IMR-90 (cell line): ENCODE measurements at regions of chr9 and their contacts with region 1.

Region 1: GRCh38 chr9:2602704-2603116 is 18.9 kb upstream of the VLDLR start:
- DNase-seq: peak; percentile 23
- ATAC-seq: peak; percentile 42
- H3K4me3 ChIP-seq: no peak overlapping the region
- H3K27ac ChIP-seq: no peak overlapping the region
- H3K4me1 ChIP-seq: no peaks in the 10 kb centered on the region
- H3K27me3 ChIP-seq: no peaks in the 10 kb centered on the region; the same call in 1 of the 2 replicates
- CTCF ChIP-seq: no peak
- POLR2A ChIP-seq: no peak
- RAD21 ChIP-seq: no peak

Region 2: DNA sequence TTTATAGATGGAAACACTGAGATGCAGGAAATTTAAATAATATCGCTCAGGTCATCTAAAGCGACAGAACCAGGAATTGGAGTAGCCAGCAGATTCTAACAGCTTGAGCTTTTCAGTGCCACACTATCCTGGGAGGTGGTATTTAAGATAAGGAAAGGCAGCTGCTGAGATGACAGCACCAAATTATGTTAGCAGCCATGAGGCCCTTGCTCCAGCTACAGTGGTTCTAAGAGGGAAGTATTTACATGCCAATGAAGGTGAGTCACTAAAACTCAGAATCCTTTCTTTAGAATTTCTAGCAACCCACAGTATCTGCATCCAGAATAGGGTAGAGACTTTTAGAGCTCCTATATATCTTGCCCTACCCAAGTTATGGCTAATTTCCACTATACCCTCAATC is 108.1 kb before region 1 on chr9:
- CTCF ChIA-PET with region 1: no interaction called
- POLR2A ChIA-PET with region 1: no interaction called
- dilution Hi-C with region 1: no loop called
- in situ Hi-C with region 1: no loop called
- intact Hi-C with region 1: loop called (anchors 5 kb)
- DNase-seq: peak; percentile 88
- ATAC-seq: peak; percentile 94
- H3K4me3 ChIP-seq: no peak overlapping the region
- H3K27ac ChIP-seq: peak overlapping the region; percentile 76; the same call in 1 of the 2 replicates
- H3K4me1 ChIP-seq: peaks cover 12% of the 10 kb centered on the region
- H3K27me3 ChIP-seq: no peaks in the 10 kb centered on the region
- CTCF ChIP-seq: no peak
- POLR2A ChIP-seq: no peak
- RAD21 ChIP-seq: 0 out of 2 replicates have a peak, but pooled peaks have one; percentile 11

Region 3: GRCh38 chr9:2506321-2506720 is 96.4 kb before region 1 on chr9:
- CTCF ChIA-PET with region 1: no interaction called
- POLR2A ChIA-PET with region 1: no interaction called
- dilution Hi-C with region 1: no loop called
- in situ Hi-C with region 1: no loop called
- intact Hi-C with region 1: no loop called
- DNase-seq: no peak
- ATAC-seq: no peak
- H3K4me3 ChIP-seq: no peak overlapping the region
- H3K27ac ChIP-seq: no peak overlapping the region
- H3K4me1 ChIP-seq: peaks cover 2% of the 10 kb centered on the region; the same call in 1 of the 2 replicates
- H3K27me3 ChIP-seq: no peaks in the 10 kb centered on the region
- CTCF ChIP-seq: no peak
- POLR2A ChIP-seq: no peak
- RAD21 ChIP-seq: no peak

Region 4: GRCh38 chr9:2559212-2560152 is 43.2 kb before region 1 on chr9:
- CTCF ChIA-PET with region 1: no interaction called
- POLR2A ChIA-PET with region 1: no interaction called
- dilution Hi-C with region 1: no loop called
- in situ Hi-C with region 1: no loop called
- intact Hi-C with region 1: loop called (anchors 5 kb)
- DNase-seq: peak; percentile 95
- ATAC-seq: peak; percentile 98
- H3K4me3 ChIP-seq: no peak overlapping the region
- H3K27ac ChIP-seq: peak overlapping the region; percentile 93
- H3K4me1 ChIP-seq: peaks cover 12% of the 10 kb centered on the region
- H3K27me3 ChIP-seq: no peaks in the 10 kb centered on the region
- CTCF ChIP-seq: no peak
- POLR2A ChIP-seq: no peak
- RAD21 ChIP-seq: no peak

Region 5: GRCh38 chr9:2709645-2710101 is 107.0 kb after region 1 on chr9:
- CTCF ChIA-PET with region 1: no interaction called
- POLR2A ChIA-PET with region 1: no interaction called
- dilution Hi-C with region 1: no loop called
- in situ Hi-C with region 1: no loop called
- intact Hi-C with region 1: no loop called
- DNase-seq: no peak
- ATAC-seq: peak; percentile 44; the same call in 1 of the 2 replicates
- H3K4me3 ChIP-seq: no peak overlapping the region
- H3K27ac ChIP-seq: no peak overlapping the region
- H3K4me1 ChIP-seq: no peaks in the 10 kb centered on the region
- H3K27me3 ChIP-seq: no peaks in the 10 kb centered on the region
- CTCF ChIP-seq: no peak
- POLR2A ChIP-seq: no peak
- RAD21 ChIP-seq: no peak